ENCODE measurements at regions of chr19 and their contacts with region 1.

Region 1: GRCh38 chr19:44164673-44165512 is at the start of gene ZNF226:
- DNase-seq: peak; percentile 71
- H3K4me3 Mint-ChIP-seq: peak within 1 kb of the TSS; percentile 90
- H3K27ac Mint-ChIP-seq: peak within 1 kb of the TSS; percentile 84
- H3K4me1 Mint-ChIP-seq: peaks cover 29% of the 10 kb centered on the region
- H3K27me3 Mint-ChIP-seq: no peaks in the 10 kb centered on the region
- total RNA-seq, gene ZNF226: 10.5 and 11.6 TPM in 2 replicates

Region 2: GRCh38 chr19:44141191-44142058 is 23.5 kb before region 1 on chr19 and contains the start of gene ZNF234:
- intact Hi-C with region 1: loop called (anchors 1 kb)
- DNase-seq: peak; percentile 52
- H3K4me3 Mint-ChIP-seq: peak within 1 kb of the TSS; percentile 93
- H3K27ac Mint-ChIP-seq: peak within 1 kb of the TSS; percentile 76
- H3K4me1 Mint-ChIP-seq: peaks cover 14% of the 10 kb centered on the region
- H3K27me3 Mint-ChIP-seq: no peaks in the 10 kb centered on the region
- total RNA-seq, gene ZNF234: 8.4 and 10.3 TPM in 2 replicates

Region 3: DNA sequence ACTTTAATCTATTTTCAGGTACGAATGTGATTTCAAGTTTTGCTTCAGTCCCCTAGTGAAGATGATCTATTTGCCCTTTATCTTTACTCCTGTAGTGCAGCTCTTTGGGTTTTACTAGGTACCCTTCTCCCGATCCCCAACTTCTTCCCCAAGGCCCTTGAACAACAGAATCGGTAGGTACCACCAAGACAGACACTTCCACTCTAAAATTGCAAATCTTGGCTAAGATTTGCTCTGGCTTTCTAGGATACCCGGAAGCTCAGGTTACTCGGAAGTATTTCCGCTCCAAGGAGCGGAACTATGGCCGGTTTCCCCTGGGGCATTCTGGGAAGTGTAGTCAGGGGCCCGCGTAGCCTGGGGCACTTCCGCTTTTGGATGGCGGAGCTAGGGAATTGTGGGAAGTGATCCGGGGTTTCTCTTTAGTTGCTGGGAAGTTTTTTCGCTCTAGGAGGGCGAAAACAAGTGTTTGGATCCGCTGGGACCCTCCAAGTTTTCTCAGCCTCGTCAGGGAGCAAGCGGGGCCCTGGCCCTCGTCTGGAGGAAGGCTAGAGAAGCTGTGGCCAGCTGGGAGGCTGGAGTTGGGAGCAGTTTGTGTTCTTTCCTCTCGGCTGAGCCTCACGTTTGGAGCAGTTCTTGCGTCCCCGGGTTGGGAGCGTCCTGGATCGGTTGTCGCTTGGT is 42.4 kb after region 1 on chr19:
- intact Hi-C with region 1: loop called (anchors 1 kb)
- DNase-seq: peak; percentile 73
- H3K4me3 Mint-ChIP-seq: peak overlapping the region; percentile 86
- H3K27ac Mint-ChIP-seq: peak overlapping the region; percentile 69
- H3K4me1 Mint-ChIP-seq: peaks cover 16% of the 10 kb centered on the region
- H3K27me3 Mint-ChIP-seq: peaks cover 2% of the 10 kb centered on the region

Region 4: DNA sequence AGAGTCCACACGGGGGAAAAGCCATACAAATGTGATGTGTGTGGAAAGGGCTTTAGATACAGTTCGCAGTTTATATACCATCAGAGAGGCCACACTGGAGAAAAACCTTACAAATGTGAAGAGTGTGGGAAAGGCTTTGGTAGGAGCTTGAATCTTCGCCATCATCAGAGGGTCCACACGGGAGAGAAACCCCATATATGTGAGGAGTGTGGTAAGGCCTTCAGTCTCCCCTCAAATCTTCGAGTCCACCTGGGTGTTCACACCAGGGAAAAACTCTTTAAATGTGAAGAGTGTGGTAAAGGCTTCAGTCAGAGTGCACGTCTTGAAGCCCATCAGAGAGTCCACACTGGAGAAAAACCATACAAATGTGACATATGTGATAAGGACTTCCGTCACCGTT is 71.5 kb after region 1 on chr19:
- intact Hi-C with region 1: no loop called
- DNase-seq: no peak
- H3K4me3 Mint-ChIP-seq: no peak overlapping the region
- H3K27ac Mint-ChIP-seq: no peak overlapping the region
- H3K4me1 Mint-ChIP-seq: no peaks in the 10 kb centered on the region
- H3K27me3 Mint-ChIP-seq: no peaks in the 10 kb centered on the region

Region 5: DNA sequence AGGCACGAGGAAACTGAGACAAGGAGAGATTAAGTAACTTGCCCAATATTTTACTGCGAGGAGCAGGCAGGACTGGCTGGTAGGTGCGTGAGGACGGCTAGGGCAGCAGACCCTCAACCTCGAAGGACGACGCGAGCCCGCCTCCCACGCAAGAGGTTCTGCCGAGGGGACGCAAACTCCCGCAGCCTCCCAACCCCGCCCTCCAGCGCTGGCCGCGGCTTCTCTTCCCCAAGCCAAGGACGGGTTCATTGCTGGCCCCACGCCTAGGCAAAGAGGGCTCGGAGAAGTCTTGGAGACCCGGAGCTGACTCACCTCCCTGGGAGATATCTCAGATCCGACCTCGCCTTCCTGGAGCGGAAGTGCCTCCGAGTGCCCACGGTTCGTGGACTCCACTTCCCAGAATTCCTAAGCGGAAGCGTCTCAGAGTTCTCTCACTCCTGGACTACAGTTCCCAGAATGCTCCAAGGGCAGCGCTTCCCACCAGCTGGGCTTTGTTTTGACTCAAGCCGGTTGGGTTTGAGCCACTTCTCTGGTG is 139.8 kb after region 1 on chr19 and contains the start of gene ZNF235:
- intact Hi-C with region 1: loop called (anchors 1 kb)
- DNase-seq: peak; percentile 60
- H3K4me3 Mint-ChIP-seq: peak within 1 kb of the TSS; percentile 90
- H3K27ac Mint-ChIP-seq: peak within 1 kb of the TSS; percentile 34
- H3K4me1 Mint-ChIP-seq: peaks cover 20% of the 10 kb centered on the region
- H3K27me3 Mint-ChIP-seq: no peaks in the 10 kb centered on the region
- total RNA-seq, gene ZNF235: 3.8 and 4.7 TPM in 2 replicates